BJ (cell line): ENCODE measurements at regions of chr2 and their contacts with region 1.

Region 1: GRCh38 chr2:61419129-61419528 is 51.8 kb downstream of the USP34 start:
- DNase-seq: no peak
- H3K4me3 ChIP-seq: no peak overlapping the region
- H3K27me3 ChIP-seq: no peaks in the 10 kb centered on the region
- CTCF ChIP-seq: no peak

Region 2: GRCh38 chr2:61220768-61221167 is 198.4 kb before region 1 on chr2:
- CTCF ChIA-PET with region 1: no interaction called
- POLR2A ChIA-PET with region 1: no interaction called
- DNase-seq: peak; percentile 37
- H3K4me3 ChIP-seq: no peak overlapping the region
- H3K27me3 ChIP-seq: no peaks in the 10 kb centered on the region
- CTCF ChIP-seq: no peak

Region 3: DNA sequence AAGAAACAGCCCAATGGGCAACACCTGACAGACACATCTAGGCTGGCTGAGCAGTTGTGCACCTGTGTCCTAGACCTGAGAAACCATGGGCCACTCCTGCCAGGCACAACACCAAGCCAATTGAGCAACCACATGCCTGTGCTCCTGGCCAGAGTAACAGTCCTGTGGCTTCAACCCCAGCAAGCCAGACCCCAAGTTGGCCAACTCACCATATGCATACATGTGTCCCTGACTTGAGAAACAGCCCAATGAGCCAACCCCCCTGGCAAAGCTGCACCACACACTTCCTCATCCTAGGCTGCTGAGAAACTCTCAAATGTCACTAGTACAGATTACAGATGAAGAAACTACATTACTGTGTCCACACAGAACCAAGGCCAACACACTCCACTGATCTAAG is 15.2 kb after region 1 on chr2:
- CTCF ChIA-PET with region 1: no interaction called
- POLR2A ChIA-PET with region 1: no interaction called
- DNase-seq: no peak
- H3K4me3 ChIP-seq: no peak overlapping the region
- H3K27me3 ChIP-seq: no peaks in the 10 kb centered on the region
- CTCF ChIP-seq: no peak

Region 4: DNA sequence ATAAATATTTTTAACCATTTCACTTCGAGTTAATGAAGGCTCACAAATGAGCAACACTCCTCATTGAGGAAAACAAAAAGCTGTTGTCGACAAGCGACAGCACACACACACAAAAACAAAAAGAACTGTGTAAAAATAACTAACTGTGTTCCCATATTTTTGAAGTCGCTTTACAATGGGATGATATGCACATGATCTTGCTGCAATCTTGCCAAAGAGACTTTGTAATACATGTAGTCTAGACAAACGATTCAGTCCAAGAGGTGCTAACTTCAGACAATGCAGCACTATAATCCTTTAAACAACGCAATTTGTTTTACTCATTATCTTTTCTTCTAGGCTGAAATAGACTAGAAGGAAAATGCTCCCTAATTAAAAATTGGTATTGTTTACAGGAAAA is 59.0 kb after region 1 on chr2:
- CTCF ChIA-PET with region 1: no interaction called
- POLR2A ChIA-PET with region 1: no interaction called
- DNase-seq: no peak
- H3K4me3 ChIP-seq: no peak overlapping the region
- H3K27me3 ChIP-seq: no peaks in the 10 kb centered on the region
- CTCF ChIP-seq: no peak

Region 5: DNA sequence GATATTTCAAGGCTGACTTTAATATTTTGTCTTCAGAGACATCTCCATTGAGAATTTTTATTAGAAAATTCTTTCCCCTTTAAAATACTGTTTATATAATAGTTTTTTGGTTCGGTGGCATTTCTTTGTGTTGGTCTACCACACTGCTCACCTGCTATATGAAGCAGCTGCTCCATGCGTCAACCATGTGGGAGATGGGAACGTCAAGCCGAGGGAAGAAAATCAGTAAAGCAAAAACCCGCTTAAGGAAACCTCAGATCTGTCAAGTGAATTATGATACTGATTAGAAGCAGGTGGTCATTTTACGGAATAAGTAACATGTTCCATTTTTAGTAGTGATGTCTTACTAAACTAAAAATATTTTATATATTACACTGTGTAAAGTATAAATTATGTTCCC is 1092.5 kb after region 1 on chr2:
- CTCF ChIA-PET with region 1: no interaction called
- POLR2A ChIA-PET with region 1: interaction called, 10 read pairs
- DNase-seq: no peak
- H3K4me3 ChIP-seq: no peak overlapping the region
- H3K27me3 ChIP-seq: no peaks in the 10 kb centered on the region
- CTCF ChIP-seq: no peak